AG04449 (cell line): ENCODE measurements at regions of chr1 and their contacts with region 1.

Region 1: DNA sequence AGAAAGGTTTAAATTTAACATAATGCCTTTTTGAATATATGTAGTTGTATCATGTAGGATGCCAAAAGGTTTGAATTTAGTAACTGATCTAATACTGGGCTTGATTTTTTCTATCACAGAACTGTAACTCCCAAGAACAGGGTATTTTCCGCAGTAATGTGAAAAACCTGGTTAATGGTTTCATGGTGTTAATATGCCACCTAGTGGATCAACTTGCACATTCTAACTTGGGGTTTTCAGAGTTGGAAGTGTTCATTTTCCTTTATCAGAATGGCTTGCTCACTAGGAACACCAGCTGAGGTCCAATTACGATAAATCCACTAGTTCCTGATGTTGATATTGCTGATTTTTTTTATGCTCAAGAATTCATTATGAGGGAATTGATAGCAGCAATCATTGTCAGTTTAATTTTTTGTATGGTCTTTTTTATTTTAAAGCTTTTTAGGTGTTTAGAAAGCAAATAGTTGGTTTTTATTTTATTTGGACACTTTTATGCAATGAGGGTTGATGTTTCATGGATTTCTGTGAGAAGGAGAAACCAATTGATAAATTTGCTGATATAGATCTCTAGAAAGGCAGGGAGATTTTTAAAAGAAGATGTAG is 157.2 kb downstream of the PLA2G4A start:
- DNase-seq: no peak
- H3K4me3 ChIP-seq: no peak overlapping the region
- CTCF ChIP-seq: peak; percentile 58

Region 2: GRCh38 chr1:186404454-186405051 is 581.4 kb before region 1 on chr1:
- CTCF ChIA-PET with region 1: interaction called, 16 read pairs
- POLR2A ChIA-PET with region 1: no interaction called
- DNase-seq: peak; percentile 17
- H3K4me3 ChIP-seq: no peak overlapping the region
- CTCF ChIP-seq: peak; percentile 60

Region 3: GRCh38 chr1:186605762-186606350 is 380.1 kb before region 1 on chr1:
- CTCF ChIA-PET with region 1: interaction called, 50 read pairs
- POLR2A ChIA-PET with region 1: no interaction called
- DNase-seq: no peak
- H3K4me3 ChIP-seq: no peak overlapping the region
- CTCF ChIP-seq: peak; percentile 80

Region 4: GRCh38 chr1:186722711-186723309 is 263.2 kb before region 1 on chr1:
- CTCF ChIA-PET with region 1: interaction called, 10 read pairs
- POLR2A ChIA-PET with region 1: no interaction called
- DNase-seq: no peak
- H3K4me3 ChIP-seq: no peak overlapping the region
- CTCF ChIP-seq: peak; percentile 29

Region 5: GRCh38 chr1:188043536-188044245 is 1057.7 kb after region 1 on chr1:
- CTCF ChIA-PET with region 1: no interaction called
- POLR2A ChIA-PET with region 1: no interaction called
- DNase-seq: no peak
- H3K4me3 ChIP-seq: no peak overlapping the region
- CTCF ChIP-seq: no peak